ENCODE measurements at regions of chr14 and their contacts with region 1.

Region 1: GRCh38 chr14:35558680-35559079 is 24.7 kb downstream of the INSM2 start:
- DNase-seq: peak; percentile 72

Region 2: GRCh38 chr14:35438910-35439713 is 119.6 kb before region 1 on chr14:
- in situ Hi-C with region 1: loop called (anchors 25 kb)
- DNase-seq: peak; percentile 44

Region 3: GRCh38 chr14:35643513-35643912 is 84.8 kb after region 1 on chr14:
- in situ Hi-C with region 1: no loop called
- DNase-seq: no peak

Measured in SK-MEL-5 (cell line).